HEK293 (cell line): ENCODE measurements at regions of chr22 and their contacts with region 1.

Region 1: GRCh38 chr22:30920407-30920806 is 48.2 kb downstream of the MORC2 start:
- H3K4me3 ChIP-seq: no peak overlapping the region
- H3K27ac ChIP-seq: no peak overlapping the region
- H3K4me1 ChIP-seq: no peaks in the 10 kb centered on the region
- CTCF ChIP-seq: peak; percentile 63; the same call in 1 of the 2 replicates

Region 2: GRCh38 chr22:30754971-30755756 is 165.2 kb before region 1 on chr22:
- CTCF ChIA-PET with region 1: interaction called, 166 read pairs
- POLR2A ChIA-PET with region 1: no interaction called
- H3K4me3 ChIP-seq: no peak overlapping the region
- H3K27ac ChIP-seq: no peak overlapping the region
- H3K4me1 ChIP-seq: no peaks in the 10 kb centered on the region
- CTCF ChIP-seq: peak; percentile 45; the same call in 1 of the 2 replicates

Region 3: DNA sequence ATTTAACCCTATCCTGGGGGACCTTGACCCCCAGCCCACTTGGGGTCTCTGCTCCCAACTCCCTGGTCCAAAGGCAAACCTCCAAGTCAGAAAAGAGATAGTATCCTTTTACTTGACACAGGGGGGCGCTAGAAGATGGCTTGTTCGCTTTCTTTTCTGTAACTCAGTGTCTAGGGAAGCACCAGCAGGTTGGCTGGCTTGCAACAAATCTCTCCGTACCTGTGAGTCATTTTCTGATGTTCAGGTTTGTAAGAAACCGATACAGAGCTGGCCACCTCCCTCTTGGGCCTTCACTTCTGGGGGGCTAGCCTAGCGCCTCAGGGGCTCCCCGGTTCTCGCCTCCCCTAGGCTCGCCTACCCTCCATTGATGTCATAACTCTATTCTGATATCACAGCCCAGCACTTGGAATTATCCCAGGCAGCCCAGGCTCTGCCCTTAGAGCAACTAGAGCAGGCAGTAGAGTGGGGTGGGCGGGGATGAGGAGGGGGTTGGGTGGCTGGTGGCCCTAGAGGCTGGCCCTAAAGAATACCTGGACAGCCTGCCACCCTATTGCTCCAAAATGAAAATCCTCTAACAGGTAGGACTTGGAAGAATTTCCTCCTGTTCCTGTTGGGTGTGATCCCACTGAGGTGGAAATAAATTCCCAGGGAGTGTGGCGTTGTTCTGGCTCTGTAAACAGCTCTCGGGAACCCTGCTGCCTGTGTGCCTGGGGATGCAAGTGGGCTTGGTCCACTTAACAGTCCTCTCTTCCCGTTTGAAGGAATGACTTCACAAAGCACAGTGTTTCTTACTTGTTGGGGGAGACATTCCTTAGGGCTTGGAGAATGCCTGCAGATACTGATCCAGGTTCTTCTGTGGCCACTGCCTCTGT is 156.4 kb before region 1 on chr22:
- CTCF ChIA-PET with region 1: interaction called, 166 read pairs
- POLR2A ChIA-PET with region 1: no interaction called
- H3K4me3 ChIP-seq: no peak overlapping the region
- H3K27ac ChIP-seq: no peak overlapping the region
- H3K4me1 ChIP-seq: no peaks in the 10 kb centered on the region
- CTCF ChIP-seq: no peak

Region 4: GRCh38 chr22:30843245-30843644 is 77.2 kb before region 1 on chr22:
- CTCF ChIA-PET with region 1: interaction called, 15 read pairs
- POLR2A ChIA-PET with region 1: no interaction called
- H3K4me3 ChIP-seq: no peak overlapping the region
- H3K27ac ChIP-seq: no peak overlapping the region
- H3K4me1 ChIP-seq: no peaks in the 10 kb centered on the region
- CTCF ChIP-seq: no peak

Region 5: DNA sequence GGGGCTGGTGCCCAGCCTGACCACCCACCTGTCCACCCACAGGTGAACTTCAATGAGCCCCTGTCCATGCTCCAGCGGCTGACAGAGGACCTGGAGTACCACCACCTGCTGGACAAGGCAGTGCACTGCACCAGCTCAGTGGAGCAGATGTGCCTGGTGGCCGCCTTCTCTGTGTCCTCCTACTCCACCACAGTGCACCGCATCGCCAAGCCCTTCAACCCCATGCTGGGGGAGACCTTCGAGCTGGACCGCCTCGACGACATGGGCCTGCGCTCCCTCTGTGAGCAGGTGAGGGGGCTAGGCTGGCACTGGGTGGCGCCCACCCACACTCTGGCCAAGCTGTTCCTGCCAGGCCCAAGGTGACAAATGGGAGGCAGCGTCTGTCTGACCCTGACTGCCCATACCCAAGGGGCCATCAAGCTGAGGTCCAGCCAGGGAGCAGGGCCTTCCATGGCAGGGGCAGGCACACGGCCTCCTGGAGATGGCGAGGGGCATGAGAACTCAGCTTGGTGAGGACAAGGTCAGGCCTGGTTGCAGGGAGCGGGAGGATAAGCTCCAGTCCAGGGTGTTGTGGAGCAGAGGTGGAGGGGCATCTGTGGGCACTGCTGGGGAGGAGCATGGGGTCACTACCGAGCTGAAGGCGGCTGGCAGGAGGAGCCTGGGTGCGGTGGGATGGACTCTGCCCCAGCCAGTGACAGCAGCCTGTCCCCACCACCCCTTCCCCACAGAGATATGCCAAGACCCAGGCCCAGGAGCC is 29.5 kb before region 1 on chr22:
- CTCF ChIA-PET with region 1: interaction called, 26 read pairs
- POLR2A ChIA-PET with region 1: no interaction called
- H3K4me3 ChIP-seq: no peak overlapping the region
- H3K27ac ChIP-seq: no peak overlapping the region
- H3K4me1 ChIP-seq: no peaks in the 10 kb centered on the region
- CTCF ChIP-seq: peak; percentile 81

Region 6: GRCh38 chr22:30908051-30908461 is 12.4 kb before region 1 on chr22:
- CTCF ChIA-PET with region 1: interaction called, 89 read pairs
- POLR2A ChIA-PET with region 1: no interaction called
- H3K4me3 ChIP-seq: no peak overlapping the region
- H3K27ac ChIP-seq: no peak overlapping the region
- H3K4me1 ChIP-seq: no peaks in the 10 kb centered on the region
- CTCF ChIP-seq: no peak